Naive thymus-derived CD4-positive, alpha-beta T cell (primary cell): ENCODE measurements at regions of chr17 and their contacts with region 1.

Region 1: GRCh38 chr17:82450170-82451106 is at the start of gene CYBC1:
- DNase-seq: peak; percentile 88 to 97 (median 94)
- ATAC-seq: peak; percentile 91
- H3K4me3 ChIP-seq: peak within 1 kb of the TSS; percentile 92
- H3K4me3 Mint-ChIP-seq: peak within 1 kb of the TSS; percentile 93 to 99 (median 98)
- H3K27ac ChIP-seq: peak within 1 kb of the TSS; percentile 86
- H3K27ac Mint-ChIP-seq: peak within 1 kb of the TSS; percentile 92 to 99 (median 97)
- H3K4me1 ChIP-seq: peaks cover 14 to 22% of the 10 kb centered on the region in 2 donors
- H3K4me1 Mint-ChIP-seq: peaks cover 22 to 49% (median 33%) of the 10 kb centered on the region in 7 donors
- H3K27me3 ChIP-seq: no peaks in the 10 kb centered on the region
- H3K27me3 Mint-ChIP-seq: no peaks in the 10 kb centered on the region
- total RNA-seq, gene CYBC1: 112 to 385 (median 199) TPM

Region 2: DNA sequence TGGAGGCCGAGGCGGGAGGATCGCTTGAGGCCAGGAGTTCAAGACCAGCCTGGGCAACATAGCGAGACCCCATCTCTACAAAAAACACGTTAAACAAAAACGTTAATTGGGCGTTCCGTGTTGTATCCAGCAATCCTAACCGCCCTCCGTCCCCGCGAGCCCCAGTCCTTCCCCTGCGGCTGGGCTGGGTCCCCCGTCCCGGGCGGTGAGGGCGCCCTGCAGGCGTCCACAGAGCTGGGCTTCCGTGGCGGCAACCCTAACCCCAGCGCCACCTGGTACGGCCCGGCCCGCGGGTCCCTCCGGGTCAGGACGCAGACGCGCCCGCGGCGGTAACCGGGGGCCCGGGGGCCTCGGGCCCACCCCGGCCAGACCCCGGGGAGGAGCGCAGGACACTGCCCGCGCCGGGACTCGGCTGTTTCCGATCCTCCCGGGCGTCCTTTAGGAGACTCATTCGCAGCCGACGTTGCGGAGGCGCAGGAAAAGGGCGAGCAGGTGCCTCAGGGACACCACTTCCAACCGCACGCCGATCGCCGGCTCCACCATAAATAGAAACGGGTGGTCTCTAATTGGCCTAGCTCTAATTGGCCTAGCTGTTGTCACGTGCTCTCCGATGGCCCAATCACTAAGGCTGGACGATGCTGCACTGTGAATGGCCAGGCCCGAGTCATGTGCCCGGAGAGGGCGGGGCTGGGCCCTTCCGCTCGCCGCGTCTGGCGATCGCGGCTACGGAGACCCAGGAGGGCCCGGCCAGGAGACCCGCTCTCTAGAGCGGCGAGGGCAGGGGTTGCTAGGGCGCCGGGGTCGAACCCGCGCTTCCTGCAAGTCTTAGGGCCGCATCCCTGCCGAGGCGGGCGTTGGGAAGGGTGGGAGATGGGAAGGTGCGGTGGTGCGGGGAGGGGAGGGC is 157.9 kb before region 1 on chr17:
- CTCF ChIA-PET with region 1: no interaction called
- POLR2A ChIA-PET with region 1: interaction called, 7 read pairs
- intact Hi-C with region 1: loop called in 1 of 2 experiments (anchors 1 kb)
- DNase-seq: peak; percentile 76 to 94 (median 91)
- ATAC-seq: peak; percentile 95
- H3K4me3 ChIP-seq: peak overlapping the region; percentile 72
- H3K4me3 Mint-ChIP-seq: peak overlapping the region; percentile 83 to 94 (median 91)
- H3K27ac ChIP-seq: peak overlapping the region; percentile 99
- H3K27ac Mint-ChIP-seq: peak overlapping the region; percentile 86 to 96 (median 92)
- H3K4me1 ChIP-seq: peaks cover 18 to 21% of the 10 kb centered on the region in 2 donors
- H3K4me1 Mint-ChIP-seq: peaks cover 14 to 54% (median 43%) of the 10 kb centered on the region in 7 donors
- H3K27me3 ChIP-seq: no peaks in the 10 kb centered on the region
- H3K27me3 Mint-ChIP-seq: no peaks in the 10 kb centered on the region

Region 3: DNA sequence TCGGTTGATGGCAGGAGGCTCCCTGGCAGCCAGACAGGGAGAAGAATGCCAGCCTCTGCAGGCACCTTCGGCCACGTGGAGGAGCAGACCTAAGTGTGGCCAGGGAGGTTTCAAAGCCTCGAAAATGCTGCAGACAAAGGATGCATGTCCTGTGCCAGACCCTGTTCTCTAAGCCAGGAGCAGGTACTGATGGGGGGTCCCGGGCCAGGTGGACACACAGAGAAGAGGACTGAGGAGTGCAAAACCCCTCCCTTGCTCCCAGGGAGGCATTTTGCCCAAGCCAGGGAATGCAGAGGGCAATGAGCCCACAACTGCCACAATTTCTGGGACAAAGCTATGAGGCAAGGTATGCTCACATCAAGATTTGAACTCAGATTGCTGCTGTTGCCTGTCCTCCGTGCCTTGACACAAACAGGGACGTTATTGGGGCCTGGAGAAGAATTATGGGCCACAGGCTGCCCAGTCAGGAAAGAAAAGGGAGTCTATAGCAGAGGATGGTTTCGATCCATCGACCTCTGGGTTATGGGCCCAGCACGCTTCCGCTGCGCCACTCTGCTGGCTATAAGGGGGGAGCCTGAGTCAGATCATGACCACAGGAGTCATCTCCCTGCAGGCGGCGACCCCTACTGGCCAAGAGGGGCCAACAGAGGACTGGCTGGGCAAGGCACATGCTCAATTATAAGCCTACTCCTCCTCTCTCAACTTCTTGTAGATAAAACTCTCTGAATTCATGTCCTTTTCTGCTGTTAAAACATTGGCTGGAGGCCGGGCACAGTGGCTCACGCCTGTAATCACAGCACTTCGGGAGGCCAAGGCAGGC is 44.0 kb after region 1 on chr17:
- CTCF ChIA-PET with region 1: no interaction called
- POLR2A ChIA-PET with region 1: interaction called, 3 read pairs
- intact Hi-C with region 1: loop called (anchors 1 to 2 kb)
- DNase-seq: peak; percentile 68 to 92 (median 80)
- ATAC-seq: peak; percentile 80
- H3K4me3 ChIP-seq: no peak overlapping the region
- H3K4me3 Mint-ChIP-seq: peak overlapping the region in 9 of 10 donors; percentile 14 to 84 (median 65)
- H3K27ac ChIP-seq: peak overlapping the region; percentile 28
- H3K27ac Mint-ChIP-seq: peak overlapping the region; percentile 77 to 94 (median 87)
- H3K4me1 ChIP-seq: peaks cover 0 to 9% of the 10 kb centered on the region in 2 donors
- H3K4me1 Mint-ChIP-seq: peaks cover 8 to 33% (median 25%) of the 10 kb centered on the region in 7 donors
- H3K27me3 ChIP-seq: no peaks in the 10 kb centered on the region
- H3K27me3 Mint-ChIP-seq: peaks cover 0 to 2% (median 0%) of the 10 kb centered on the region in 5 donors

Region 4: GRCh38 chr17:82518826-82519810 is 68.7 kb after region 1 on chr17 and contains the start of gene FOXK2:
- CTCF ChIA-PET with region 1: no interaction called
- POLR2A ChIA-PET with region 1: interaction called, 3 read pairs
- intact Hi-C with region 1: loop called in 1 of 2 experiments (anchors 1 kb)
- DNase-seq: peak; percentile 90 to 99 (median 95)
- ATAC-seq: peak; percentile 99
- H3K4me3 ChIP-seq: peak within 1 kb of the TSS; percentile 67
- H3K4me3 Mint-ChIP-seq: peak within 1 kb of the TSS; percentile 82 to 99 (median 93)
- H3K27ac ChIP-seq: peak within 1 kb of the TSS; percentile 92
- H3K27ac Mint-ChIP-seq: peak within 1 kb of the TSS; percentile 71 to 93 (median 87)
- H3K4me1 ChIP-seq: peaks cover 4 to 16% of the 10 kb centered on the region in 2 donors
- H3K4me1 Mint-ChIP-seq: peaks cover 15 to 36% (median 30%) of the 10 kb centered on the region in 7 donors
- H3K27me3 ChIP-seq: no peaks in the 10 kb centered on the region
- H3K27me3 Mint-ChIP-seq: no peaks in the 10 kb centered on the region
- total RNA-seq, gene FOXK2: 36.5 to 67.1 (median 48.4) TPM